ENCODE measurements at regions of chr7 and their contacts with region 1.

Region 1: DNA sequence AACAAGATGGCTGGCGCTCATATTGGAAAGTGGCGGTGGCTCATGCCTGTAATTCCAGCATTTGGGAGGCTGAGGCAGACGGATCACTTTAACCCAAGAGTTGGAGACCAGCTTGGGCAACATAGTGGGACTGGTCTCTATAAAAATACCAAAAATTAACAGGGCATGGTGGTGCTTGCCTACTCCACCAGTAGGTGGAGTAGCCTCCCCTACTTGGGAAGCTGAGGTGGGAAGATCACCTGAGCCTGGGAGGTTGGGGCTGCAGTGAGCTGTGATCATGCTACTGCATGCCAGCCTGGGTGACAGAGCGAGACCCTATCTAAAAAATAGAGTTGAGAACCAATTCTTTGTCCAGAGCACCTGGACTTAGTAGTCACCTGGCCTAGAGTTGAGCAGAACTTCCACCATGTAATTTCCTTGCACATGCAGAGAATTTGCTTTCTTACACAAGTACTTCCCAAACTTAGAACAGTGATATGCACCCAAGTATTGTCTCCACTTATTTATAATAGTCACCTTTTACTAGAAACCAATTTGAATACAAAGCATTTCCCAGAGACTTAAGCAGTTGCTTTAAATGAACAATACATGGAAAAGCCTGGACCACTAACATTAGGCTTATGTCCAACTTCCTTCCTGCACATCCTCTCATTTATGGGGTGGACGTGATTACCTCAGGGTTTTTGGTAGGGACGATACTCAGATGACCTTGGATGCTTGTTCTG is 15.9 kb downstream of the LAMB4 start:
- DNase-seq: no peak
- ATAC-seq: peak; percentile 74
- H3K4me3 Mint-ChIP-seq: no peak overlapping the region
- H3K27ac Mint-ChIP-seq: no peak overlapping the region
- H3K4me1 Mint-ChIP-seq: no peaks in the 10 kb centered on the region
- H3K27me3 Mint-ChIP-seq: no peaks in the 10 kb centered on the region
- CTCF ChIP-seq: no peak

Region 2: DNA sequence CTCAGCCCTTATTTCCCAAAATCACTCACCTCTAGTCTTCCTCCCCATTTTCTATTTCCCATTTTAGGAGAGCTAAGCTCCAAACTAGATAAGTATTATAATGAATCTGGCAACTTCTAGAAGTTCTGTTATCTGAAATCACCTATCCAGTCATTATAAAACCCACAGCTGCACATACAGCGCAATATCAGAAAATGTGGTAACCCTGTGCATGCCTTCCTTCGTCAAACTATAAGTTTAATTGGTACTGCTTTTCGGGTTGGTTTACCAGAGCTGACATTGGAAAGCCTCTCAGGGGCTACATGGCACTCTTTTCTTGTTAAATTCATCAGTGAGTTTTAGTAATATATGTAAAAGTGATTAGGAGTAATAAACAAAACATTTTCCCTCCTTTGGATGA is 14.2 kb after region 1 on chr7:
- CTCF ChIA-PET with region 1: interaction called, 4 read pairs
- POLR2A ChIA-PET with region 1: no interaction called
- intact Hi-C with region 1: loop called (anchors 1 kb)
- DNase-seq: no peak
- ATAC-seq: no peak
- H3K4me3 Mint-ChIP-seq: no peak overlapping the region
- H3K27ac Mint-ChIP-seq: no peak overlapping the region
- H3K4me1 Mint-ChIP-seq: no peaks in the 10 kb centered on the region
- H3K27me3 Mint-ChIP-seq: no peaks in the 10 kb centered on the region
- CTCF ChIP-seq: no peak

Region 3: DNA sequence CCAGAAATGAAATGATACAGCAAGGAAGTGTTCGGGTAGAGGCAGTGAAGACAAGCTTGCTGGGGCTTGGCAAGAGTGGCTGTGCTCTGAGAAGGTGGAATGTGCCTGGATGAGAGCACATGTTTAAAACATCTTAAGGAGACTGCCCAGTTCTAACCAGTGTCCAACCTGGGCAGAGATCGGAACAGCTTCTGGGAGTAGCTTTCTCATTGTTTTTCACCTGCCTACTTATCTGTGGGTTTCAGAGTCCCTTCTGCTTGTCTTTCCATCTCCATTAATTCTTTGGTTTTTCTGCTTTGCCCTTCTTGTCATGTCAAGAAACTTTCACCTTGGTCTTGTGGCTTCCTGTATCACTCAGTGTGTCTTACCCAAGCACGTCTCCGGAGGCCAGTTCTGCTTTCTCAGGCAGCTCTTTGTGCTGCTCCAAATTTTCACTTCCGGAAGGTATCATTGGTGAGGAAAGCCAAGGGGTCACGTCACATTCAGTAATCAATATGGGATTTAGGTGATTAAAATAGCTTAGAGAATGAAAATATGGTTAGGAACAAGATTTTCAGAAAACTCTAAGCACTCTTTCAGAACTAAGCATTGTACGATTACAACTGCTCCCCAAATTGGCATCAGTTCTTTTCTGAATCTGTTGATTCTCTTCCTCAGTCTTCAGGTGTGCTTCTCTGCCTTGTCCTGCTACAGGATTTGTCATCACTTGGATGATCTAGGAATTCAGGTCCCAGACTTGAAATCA is 21.3 kb after region 1 on chr7:
- CTCF ChIA-PET with region 1: interaction called, 7 read pairs
- POLR2A ChIA-PET with region 1: no interaction called
- intact Hi-C with region 1: loop called (anchors 2 kb)
- DNase-seq: no peak
- ATAC-seq: peak; percentile 95
- H3K4me3 Mint-ChIP-seq: peak overlapping the region; percentile 52
- H3K27ac Mint-ChIP-seq: peak overlapping the region; percentile 87
- H3K4me1 Mint-ChIP-seq: peaks cover 30% of the 10 kb centered on the region
- H3K27me3 Mint-ChIP-seq: no peaks in the 10 kb centered on the region
- CTCF ChIP-seq: no peak

Region 4: GRCh38 chr7:108328174-108328651 is 213.9 kb after region 1 on chr7:
- CTCF ChIA-PET with region 1: no interaction called
- POLR2A ChIA-PET with region 1: no interaction called
- intact Hi-C with region 1: no loop called
- DNase-seq: no peak
- ATAC-seq: peak; percentile 94
- H3K4me3 Mint-ChIP-seq: peak overlapping the region; percentile 69
- H3K27ac Mint-ChIP-seq: peak overlapping the region; percentile 87
- H3K4me1 Mint-ChIP-seq: peaks cover 37% of the 10 kb centered on the region
- H3K27me3 Mint-ChIP-seq: no peaks in the 10 kb centered on the region
- CTCF ChIP-seq: no peak